PC-9 (cell line): ENCODE measurements at regions of chr9 and their contacts with region 1.

Region 1: DNA sequence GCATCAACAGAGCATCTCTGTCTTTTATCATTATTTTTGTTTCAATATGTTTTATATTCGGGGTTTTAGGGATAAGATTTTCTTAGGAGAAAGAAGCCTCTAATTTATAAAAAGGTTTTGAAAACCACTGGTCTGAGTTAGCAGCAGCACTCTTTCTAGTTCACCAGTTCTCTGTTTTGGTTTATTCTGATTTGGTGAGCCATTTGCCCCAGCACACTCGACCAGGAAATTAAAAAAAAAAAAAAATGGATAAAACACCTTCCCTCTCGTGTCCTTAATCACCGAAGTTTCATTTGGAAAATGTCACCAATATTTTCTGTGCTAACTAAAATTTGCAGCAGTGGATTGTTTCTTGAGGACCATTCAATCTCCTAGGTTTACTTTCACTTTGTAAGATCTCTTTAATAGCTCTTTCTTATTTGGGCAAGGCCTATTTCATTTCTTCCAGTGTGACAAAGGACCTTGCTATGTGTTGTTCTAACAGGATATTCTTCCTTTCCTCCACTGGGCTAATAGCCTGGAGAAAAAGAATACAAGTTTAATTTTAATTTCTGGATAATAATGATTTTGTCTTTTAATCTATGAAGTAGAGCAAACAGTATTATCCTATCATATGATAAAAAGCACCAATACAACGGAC is 57.8 kb upstream of the ANXA1 start:
- DNase-seq: no peak
- H3K4me3 ChIP-seq: peak overlapping the region; percentile 41; the same call in 1 of the 2 replicates
- H3K27ac ChIP-seq: no peak overlapping the region
- H3K4me1 ChIP-seq: 0 out of 2 replicates have a peak, but pooled peaks cover 12% of the 10 kb centered on the region
- H3K27me3 ChIP-seq: no peaks in the 10 kb centered on the region
- CTCF ChIP-seq: no peak

Region 2: DNA sequence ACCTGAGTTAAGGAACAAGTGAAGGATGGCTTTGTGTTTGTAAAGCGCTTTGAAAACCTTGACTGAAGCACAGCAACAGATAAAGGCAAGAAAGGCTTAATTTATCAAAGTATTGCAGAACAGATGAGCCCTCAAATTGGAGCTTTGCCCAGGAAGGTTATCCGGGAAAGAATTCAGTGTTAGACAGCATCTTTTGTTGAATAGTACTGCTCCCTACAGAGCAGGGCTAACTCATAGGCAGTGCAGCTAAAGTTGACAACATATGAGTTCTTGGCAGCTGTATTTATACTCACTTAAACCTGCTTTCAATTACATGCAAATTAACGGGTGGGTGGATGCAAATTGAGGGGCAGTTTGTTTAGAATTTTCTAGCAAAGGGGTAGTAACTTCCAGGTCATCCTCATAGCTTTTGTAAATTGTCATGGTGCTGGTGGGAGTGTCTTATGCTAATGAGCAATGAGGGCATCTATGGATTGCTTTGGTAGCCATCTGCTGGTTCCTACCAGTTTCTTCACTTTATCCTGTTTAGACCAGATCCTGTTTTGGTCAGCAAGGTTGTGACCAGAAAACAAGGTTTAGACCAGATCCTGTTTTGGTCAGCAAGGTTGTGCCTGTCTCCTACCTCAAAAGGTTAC is 838.8 kb before region 1 on chr9:
- CTCF ChIA-PET with region 1: no interaction called
- POLR2A ChIA-PET with region 1: no interaction called
- intact Hi-C with region 1: no loop called
- DNase-seq: no peak
- H3K4me3 ChIP-seq: no peak overlapping the region
- H3K27ac ChIP-seq: no peak overlapping the region
- H3K4me1 ChIP-seq: no peaks in the 10 kb centered on the region
- H3K27me3 ChIP-seq: no peaks in the 10 kb centered on the region
- CTCF ChIP-seq: no peak

Region 3: DNA sequence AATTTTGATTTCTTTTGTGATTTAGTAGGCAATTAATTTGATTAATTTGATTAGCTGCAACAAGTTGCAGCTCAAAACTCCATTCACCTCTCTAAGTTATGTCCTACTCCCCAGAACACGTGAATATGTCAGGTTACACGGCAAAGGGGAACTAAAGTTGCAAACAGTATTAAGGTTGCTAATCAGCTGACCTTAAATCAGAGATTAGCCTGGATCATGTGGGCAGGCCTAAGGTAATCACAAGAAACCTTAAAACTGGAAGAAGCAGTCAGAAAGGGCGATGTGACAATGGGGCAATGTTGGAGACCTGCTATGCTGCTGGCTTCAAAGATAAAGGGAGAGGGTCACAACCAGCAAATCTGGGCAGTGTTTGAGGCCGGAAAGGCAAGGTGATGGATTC is 10.5 kb after region 1 on chr9:
- CTCF ChIA-PET with region 1: no interaction called
- POLR2A ChIA-PET with region 1: interaction called, 10 read pairs
- intact Hi-C with region 1: no loop called
- DNase-seq: no peak
- H3K4me3 ChIP-seq: no peak overlapping the region
- H3K27ac ChIP-seq: no peak overlapping the region
- H3K4me1 ChIP-seq: no peaks in the 10 kb centered on the region
- H3K27me3 ChIP-seq: no peaks in the 10 kb centered on the region
- CTCF ChIP-seq: no peak

Region 4: GRCh38 chr9:73761905-73762304 is 668.0 kb after region 1 on chr9:
- CTCF ChIA-PET with region 1: no interaction called
- POLR2A ChIA-PET with region 1: no interaction called
- intact Hi-C with region 1: no loop called
- DNase-seq: no peak
- H3K4me3 ChIP-seq: no peak overlapping the region
- H3K27ac ChIP-seq: no peak overlapping the region
- H3K4me1 ChIP-seq: no peaks in the 10 kb centered on the region
- H3K27me3 ChIP-seq: no peaks in the 10 kb centered on the region
- CTCF ChIP-seq: no peak